Activated CD4-positive, alpha-beta memory T cell treated with anti-CD3 and anti-CD28 coated beads, Interleukin-2, amount 10 ng/mL, durations not matched to agents 7 days and 5 days (primary cell): ENCODE measurements at regions of chr15 and their contacts with region 1.

Region 1: DNA sequence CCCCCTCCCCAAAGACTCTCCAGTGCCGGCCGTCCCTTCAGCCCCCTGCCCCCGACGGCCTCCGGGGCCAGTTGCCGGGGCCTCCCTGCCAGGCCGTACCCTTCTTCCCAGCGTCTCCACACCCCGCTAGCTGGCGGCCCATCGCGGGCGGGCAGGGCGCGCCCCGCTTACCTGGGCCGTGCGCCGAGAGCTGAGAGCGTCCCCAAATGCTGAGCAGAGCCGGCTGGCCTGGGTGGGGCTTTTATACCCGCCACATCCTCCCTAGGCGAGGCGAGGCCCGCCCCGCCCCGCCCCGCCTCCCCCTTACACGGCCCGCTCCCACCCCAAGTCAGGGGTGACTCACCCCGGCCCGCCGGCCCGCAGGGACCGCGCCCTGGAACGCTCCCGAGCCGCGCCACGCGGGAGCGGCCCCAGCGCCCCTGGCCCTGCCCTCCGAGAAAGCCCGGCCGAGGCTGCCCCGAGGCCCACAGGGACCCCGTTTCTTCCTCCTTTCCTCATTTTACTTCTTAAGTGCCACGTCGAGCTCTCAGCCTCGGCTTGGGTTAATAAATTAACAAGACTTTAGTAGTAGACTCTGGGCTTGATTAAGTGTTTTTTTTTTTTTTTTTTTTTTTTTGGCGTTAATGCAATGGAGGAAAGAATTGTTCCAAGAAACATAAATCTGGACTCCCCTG is at the start of gene ANXA2:
- DNase-seq: peak; percentile 90
- H3K4me3 Mint-ChIP-seq: peak within 1 kb of the TSS; percentile 97
- H3K27ac Mint-ChIP-seq: peak within 1 kb of the TSS; percentile 98
- H3K4me1 Mint-ChIP-seq: peaks cover 55% of the 10 kb centered on the region
- H3K27me3 Mint-ChIP-seq: peaks cover 7% of the 10 kb centered on the region
- total RNA-seq, gene ANXA2: 558 to 566 TPM

Region 2: GRCh38 chr15:59688841-59689625 is 708.9 kb before region 1 on chr15 and contains the start of gene BNIP2:
- CTCF ChIA-PET with region 1: no interaction called
- POLR2A ChIA-PET with region 1: interaction called, 10 read pairs
- DNase-seq: peak; percentile 100
- H3K4me3 Mint-ChIP-seq: peak within 1 kb of the TSS; percentile 93
- H3K27ac Mint-ChIP-seq: peak within 1 kb of the TSS; percentile 96
- H3K4me1 Mint-ChIP-seq: peaks cover 47% of the 10 kb centered on the region
- H3K27me3 Mint-ChIP-seq: no peaks in the 10 kb centered on the region
- total RNA-seq, gene BNIP2: 83.3 to 84.5 TPM

Region 3: GRCh38 chr15:60385620-60386552 is 12.0 kb before region 1 on chr15:
- CTCF ChIA-PET with region 1: no interaction called
- POLR2A ChIA-PET with region 1: interaction called, 10 read pairs
- DNase-seq: no peak
- H3K4me3 Mint-ChIP-seq: no peak overlapping the region
- H3K27ac Mint-ChIP-seq: no peak overlapping the region
- H3K4me1 Mint-ChIP-seq: peaks cover 51% of the 10 kb centered on the region
- H3K27me3 Mint-ChIP-seq: no peaks in the 10 kb centered on the region

Region 4: GRCh38 chr15:60418096-60418495 is 20.2 kb after region 1 on chr15:
- CTCF ChIA-PET with region 1: no interaction called
- POLR2A ChIA-PET with region 1: interaction called, 10 read pairs
- DNase-seq: no peak
- H3K4me3 Mint-ChIP-seq: no peak overlapping the region
- H3K27ac Mint-ChIP-seq: no peak overlapping the region
- H3K4me1 Mint-ChIP-seq: no peaks in the 10 kb centered on the region
- H3K27me3 Mint-ChIP-seq: no peaks in the 10 kb centered on the region

Region 5: DNA sequence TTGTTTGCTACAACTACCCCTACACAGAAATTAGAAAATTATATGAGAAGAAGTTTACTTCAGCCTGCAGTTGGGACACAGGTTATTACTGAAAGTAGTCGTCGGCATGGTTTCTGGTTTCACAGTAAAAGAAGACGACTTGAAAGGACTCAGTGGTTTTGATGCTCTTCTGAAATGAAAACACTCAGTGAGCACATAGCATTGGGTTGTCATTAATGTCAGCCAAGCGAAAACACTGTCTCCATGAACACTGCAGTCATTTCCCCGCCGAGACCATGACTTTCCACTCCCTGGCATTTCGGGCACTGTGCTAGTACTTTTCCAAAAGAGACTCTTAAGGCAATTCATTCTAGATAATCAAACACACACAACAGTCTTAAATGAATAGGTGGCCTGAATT is 150.2 kb after region 1 on chr15:
- CTCF ChIA-PET with region 1: no interaction called
- POLR2A ChIA-PET with region 1: interaction called, 16 read pairs
- DNase-seq: peak; percentile 60
- H3K4me3 Mint-ChIP-seq: peak overlapping the region; percentile 65
- H3K27ac Mint-ChIP-seq: peak overlapping the region; percentile 95
- H3K4me1 Mint-ChIP-seq: peaks cover 96% of the 10 kb centered on the region
- H3K27me3 Mint-ChIP-seq: no peaks in the 10 kb centered on the region